ENCODE measurements at regions of chr17 and their contacts with region 1.

Region 1: GRCh38 chr17:49567871-49568694 is 7.6 kb upstream of the NXPH3 start:
- ATAC-seq: peak; percentile 65 to 79 (median 72)
- H3K4me3 ChIP-seq: peak overlapping the region in 1 of 5 donors; percentile 14
- H3K27ac ChIP-seq: no peak overlapping the region
- H3K4me1 ChIP-seq: no peaks in the 10 kb centered on the region

Region 2: DNA sequence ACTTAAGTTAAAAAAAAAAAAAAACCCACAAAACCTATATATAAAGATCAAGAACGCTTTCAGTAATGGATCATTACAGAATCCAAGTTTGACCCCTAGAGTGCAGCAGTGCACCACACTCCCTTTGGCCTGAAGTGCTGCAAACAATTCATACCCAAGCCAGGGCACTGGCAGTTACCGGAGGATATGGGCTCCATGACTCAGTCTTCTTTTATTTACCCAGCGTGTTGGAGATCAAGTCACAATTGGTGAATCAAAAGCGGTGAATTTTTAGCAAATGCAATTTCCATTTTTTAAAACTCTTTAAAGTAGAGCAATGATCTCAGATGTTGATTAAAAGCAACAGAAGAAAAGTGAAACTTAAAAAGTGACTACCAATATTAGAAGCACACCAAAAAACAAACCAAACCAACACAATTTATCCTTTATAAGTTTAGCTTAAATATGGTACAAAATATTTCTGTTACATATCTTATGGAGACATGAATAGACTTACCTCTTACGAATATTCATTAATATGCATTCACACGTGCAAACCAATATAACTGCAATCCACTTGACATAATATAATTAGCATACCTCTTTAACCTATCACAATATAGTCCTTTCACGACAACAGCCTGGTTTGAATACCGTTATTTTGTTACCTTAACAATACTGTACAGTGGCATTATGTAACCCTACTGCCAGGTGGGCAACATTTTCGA is 252.4 kb before region 1 on chr17:
- in situ Hi-C with region 1: loop called in 1 of 9 experiments (anchors 25 kb)
- ATAC-seq: peak; percentile 61 to 100 (median 89)
- H3K4me3 ChIP-seq: no peak overlapping the region
- H3K27ac ChIP-seq: no peak overlapping the region
- H3K4me1 ChIP-seq: peaks cover 0 to 3% of the 10 kb centered on the region in 2 donors

Region 3: DNA sequence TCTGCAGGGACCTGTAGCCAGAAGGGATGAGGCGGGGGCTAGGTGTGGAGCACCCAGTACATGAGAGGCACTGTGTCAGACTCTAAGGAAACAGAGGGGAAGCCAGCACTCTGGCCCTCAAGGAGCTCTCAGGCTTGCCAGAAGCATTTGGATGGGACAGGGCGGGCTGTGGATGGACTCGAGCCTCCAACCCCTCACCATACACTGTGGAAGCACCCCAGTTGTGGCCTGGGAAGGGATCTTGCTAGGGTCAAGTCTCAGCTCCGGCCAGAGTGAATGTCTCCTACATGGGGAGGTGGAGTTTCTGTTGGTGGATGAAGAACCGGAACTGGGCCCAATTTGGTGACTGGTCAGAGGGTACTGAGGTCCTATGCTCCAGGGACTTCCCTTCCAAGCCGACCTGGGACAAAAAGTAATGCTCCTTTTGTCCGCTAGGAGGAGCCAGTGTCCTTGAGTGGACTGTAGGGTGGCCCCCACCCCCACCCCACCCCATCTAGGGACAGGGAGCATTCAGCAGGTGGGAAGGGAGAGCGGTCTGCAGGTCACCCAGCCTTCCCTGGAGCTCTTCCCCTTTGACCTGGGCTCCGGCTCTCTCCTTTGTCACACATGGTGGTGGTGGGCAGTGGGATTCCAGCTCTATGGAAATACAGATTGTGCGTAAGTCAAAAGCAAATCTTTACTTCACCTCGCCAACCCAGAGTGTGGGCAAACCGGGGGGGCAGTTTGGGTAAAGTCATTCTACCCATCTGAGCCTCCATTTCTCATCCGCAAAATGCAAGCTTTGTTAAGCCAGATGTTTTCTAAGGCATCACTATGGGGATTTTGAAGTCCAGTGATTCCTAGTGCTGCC is 133.0 kb before region 1 on chr17:
- in situ Hi-C with region 1: loop called in 2 of 9 experiments (anchors 25 kb)
- ATAC-seq: peak in 4 of 8 experiments; percentile 28 to 91 (median 71)
- H3K4me3 ChIP-seq: peak overlapping the region in 1 of 5 donors; percentile 8
- H3K27ac ChIP-seq: no peak overlapping the region
- H3K4me1 ChIP-seq: peaks cover 42 to 47% of the 10 kb centered on the region in 2 donors

Region 4: GRCh38 chr17:49788478-49789242 is 220.6 kb after region 1 on chr17 and contains the start of gene KAT7:
- in situ Hi-C with region 1: no loop called
- ATAC-seq: peak; percentile 87 to 95 (median 92)
- H3K4me3 ChIP-seq: peak within 1 kb of the TSS; percentile 86 to 98 (median 92)
- H3K27ac ChIP-seq: peak within 1 kb of the TSS; percentile 94 to 95
- H3K4me1 ChIP-seq: peaks cover 12 to 14% of the 10 kb centered on the region in 2 donors
- total RNA-seq, gene KAT7: 18.2 to 45.5 (median 33.7) TPM

Region 5: DNA sequence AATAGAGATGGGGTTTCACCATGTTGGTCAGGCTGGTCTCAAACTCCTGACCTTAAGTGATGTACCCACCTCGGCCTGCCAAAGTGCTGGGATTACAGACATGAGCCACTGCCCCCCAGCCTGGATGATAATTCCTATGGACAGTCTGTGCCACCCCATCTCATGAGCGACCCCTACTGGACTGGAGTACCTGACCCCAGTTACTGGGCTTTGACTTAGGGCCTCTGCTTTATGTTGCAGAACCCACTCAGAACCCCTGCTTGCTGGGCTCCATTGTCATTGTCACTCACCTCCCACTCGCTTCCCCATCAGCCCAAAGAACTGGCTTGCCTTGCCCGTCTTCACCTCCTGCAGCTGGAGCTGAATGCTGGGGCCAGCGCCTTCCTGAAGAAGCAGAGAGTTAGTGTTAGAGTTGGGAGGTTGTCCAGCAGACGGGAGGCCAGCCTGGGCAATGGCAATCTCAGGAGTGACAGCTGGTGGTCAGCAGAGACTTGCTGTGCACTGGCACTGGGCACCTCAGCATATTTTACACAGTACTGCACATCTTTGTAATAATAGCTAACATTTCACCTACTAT is 275.8 kb after region 1 on chr17:
- in situ Hi-C with region 1: loop called in 1 of 9 experiments (anchors 25 kb)
- ATAC-seq: no peak
- H3K4me3 ChIP-seq: no peak overlapping the region
- H3K27ac ChIP-seq: no peak overlapping the region
- H3K4me1 ChIP-seq: no peaks in the 10 kb centered on the region

Region 6: DNA sequence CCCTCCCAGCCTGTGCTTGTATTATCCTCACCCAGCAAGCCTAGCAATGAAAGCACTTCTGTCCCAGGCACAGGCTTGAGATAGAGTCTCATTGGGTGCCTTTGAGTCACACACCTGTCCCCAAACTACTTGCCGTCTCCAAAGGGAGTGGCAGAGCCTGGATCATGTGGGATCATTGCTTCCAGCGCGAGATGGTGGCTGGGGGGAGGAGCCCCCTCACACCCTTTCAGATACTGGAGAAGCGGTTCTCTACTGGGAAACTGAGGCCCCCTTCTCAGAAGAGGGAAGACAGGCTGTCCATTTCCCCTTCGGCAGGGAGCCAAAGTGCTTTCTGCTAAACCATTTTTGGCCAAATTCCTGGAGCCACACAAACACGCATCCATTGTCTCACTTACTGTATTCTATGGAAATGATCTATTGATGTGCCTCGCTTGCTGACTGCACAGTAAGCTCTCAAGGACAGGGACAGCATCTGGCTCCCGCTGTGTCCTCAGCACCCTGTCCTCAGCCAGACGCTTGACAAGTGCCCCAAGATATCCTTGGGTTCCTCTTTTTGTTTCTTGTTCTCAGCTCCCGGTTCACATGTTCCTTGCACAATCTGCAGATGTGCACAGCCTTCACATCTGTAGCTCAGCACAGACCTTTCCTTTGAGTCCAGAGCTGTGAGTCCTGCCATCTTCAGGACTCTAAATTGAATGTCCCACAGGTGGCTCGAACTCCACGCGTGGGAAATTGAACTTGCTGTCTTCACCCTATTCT is 452.9 kb after region 1 on chr17:
- in situ Hi-C with region 1: loop called in 1 of 9 experiments (anchors 25 kb)
- ATAC-seq: no peak
- H3K4me3 ChIP-seq: no peak overlapping the region
- H3K27ac ChIP-seq: no peak overlapping the region
- H3K4me1 ChIP-seq: no peaks in the 10 kb centered on the region